Calu3 (cell line): ENCODE measurements at regions of chr12 and their contacts with region 1.

Region 1: GRCh38 chr12:76455582-76456345 is 103.8 kb downstream of the OSBPL8 start:
- DNase-seq: peak; percentile 55
- H3K4me3 Mint-ChIP-seq: no peak overlapping the region
- H3K27ac Mint-ChIP-seq: peak overlapping the region; percentile 67
- H3K4me1 Mint-ChIP-seq: peaks cover 27% of the 10 kb centered on the region
- H3K27me3 Mint-ChIP-seq: no peaks in the 10 kb centered on the region
- CTCF ChIP-seq: peak; percentile 44

Region 2: GRCh38 chr12:75526655-75527511 is 928.9 kb before region 1 on chr12:
- CTCF ChIA-PET with region 1: no interaction called
- intact Hi-C with region 1: loop called (anchors 10 kb)
- DNase-seq: peak; percentile 19
- H3K4me3 Mint-ChIP-seq: no peak overlapping the region
- H3K27ac Mint-ChIP-seq: peak overlapping the region; percentile 40
- H3K4me1 Mint-ChIP-seq: peaks cover 17% of the 10 kb centered on the region
- H3K27me3 Mint-ChIP-seq: no peaks in the 10 kb centered on the region
- CTCF ChIP-seq: peak; percentile 55

Region 3: GRCh38 chr12:76064904-76065303 is 390.9 kb before region 1 on chr12:
- CTCF ChIA-PET with region 1: no interaction called
- intact Hi-C with region 1: loop called (anchors 5 kb)
- DNase-seq: no peak
- H3K4me3 Mint-ChIP-seq: no peak overlapping the region
- H3K27ac Mint-ChIP-seq: peak overlapping the region; percentile 30
- H3K4me1 Mint-ChIP-seq: peaks cover 13% of the 10 kb centered on the region
- H3K27me3 Mint-ChIP-seq: no peaks in the 10 kb centered on the region
- CTCF ChIP-seq: no peak

Region 4: DNA sequence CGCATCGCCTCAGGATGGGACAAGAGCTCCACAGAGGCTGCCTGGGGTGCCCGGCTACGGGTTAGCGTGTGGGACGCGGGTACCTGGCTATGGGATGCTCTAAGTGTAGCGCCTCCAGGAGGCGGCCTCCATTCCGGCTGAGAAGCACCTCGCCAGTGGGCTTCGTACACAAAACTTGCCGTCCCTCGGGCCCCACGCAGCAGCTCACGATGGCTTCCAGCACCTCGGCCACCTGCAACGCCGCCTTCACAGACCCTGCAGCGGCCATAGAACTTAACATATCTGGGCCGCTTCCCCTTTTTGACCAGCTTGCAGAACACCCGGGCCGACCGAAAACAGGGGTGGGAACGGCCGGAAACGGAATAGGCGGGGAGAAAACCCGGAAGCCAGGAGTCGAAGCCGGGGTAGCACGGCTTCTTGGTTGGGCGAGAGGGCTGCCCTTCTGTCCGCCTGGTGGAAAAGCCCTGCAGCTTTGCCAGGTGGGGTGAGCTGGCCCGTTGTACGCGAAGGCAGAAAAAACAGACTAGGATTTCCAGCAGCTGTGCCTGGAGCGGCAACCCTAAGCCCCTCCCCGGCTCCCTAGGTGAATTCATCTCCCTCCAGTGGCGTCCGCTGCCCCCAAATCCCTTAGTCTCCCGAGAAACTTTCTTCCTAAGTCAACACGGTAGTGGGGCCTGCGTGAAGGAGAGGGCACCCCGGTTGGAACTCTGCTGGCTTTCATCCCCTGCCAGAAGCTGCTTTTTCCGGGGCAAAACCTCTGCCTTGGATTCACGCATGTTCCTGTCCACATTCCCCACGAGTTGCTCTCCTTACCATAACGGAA is 107.5 kb before region 1 on chr12 and contains the start of gene BBS10:
- CTCF ChIA-PET with region 1: interaction called, 12 read pairs
- intact Hi-C with region 1: loop called (anchors 2 kb)
- DNase-seq: peak; percentile 92
- H3K4me3 Mint-ChIP-seq: peak within 1 kb of the TSS; percentile 89
- H3K27ac Mint-ChIP-seq: peak within 1 kb of the TSS; percentile 85
- H3K4me1 Mint-ChIP-seq: peaks cover 25% of the 10 kb centered on the region
- H3K27me3 Mint-ChIP-seq: no peaks in the 10 kb centered on the region
- CTCF ChIP-seq: no peak
- total RNA-seq, gene BBS10: 11.7 and 13.7 TPM in 2 replicates

Region 5: GRCh38 chr12:76559400-76560085 is 103.8 kb after region 1 on chr12 and contains the start of gene OSBPL8:
- CTCF ChIA-PET with region 1: interaction called, 5 read pairs
- intact Hi-C with region 1: loop called (anchors 5 kb)
- DNase-seq: peak; percentile 97
- H3K4me3 Mint-ChIP-seq: peak within 1 kb of the TSS; percentile 90
- H3K27ac Mint-ChIP-seq: peak within 1 kb of the TSS; percentile 92
- H3K4me1 Mint-ChIP-seq: peaks cover 23% of the 10 kb centered on the region
- H3K27me3 Mint-ChIP-seq: no peaks in the 10 kb centered on the region
- CTCF ChIP-seq: no peak
- total RNA-seq, gene OSBPL8: 62.0 and 64.9 TPM in 2 replicates